ENCODE measurements at regions of chr2 and their contacts with region 1.

Region 1: GRCh38 chr2:101341901-101342624 is 33.6 kb upstream of the RNF149 start:
- DNase-seq: peak; percentile 52
- ATAC-seq: peak; percentile 90
- H3K4me3 ChIP-seq: no peak overlapping the region
- H3K27ac ChIP-seq: no peak overlapping the region
- H3K4me1 ChIP-seq: peaks cover 3 to 10% of the 10 kb centered on the region in 2 experiments; a peak in 2 of 4 replicates
- H3K27me3 ChIP-seq: no peaks in the 10 kb centered on the region
- CTCF ChIP-seq: peak; percentile 83 to 86 (median 85)
- POLR2A ChIP-seq: no peak
- RAD21 ChIP-seq: peak; percentile 95

Region 2: DNA sequence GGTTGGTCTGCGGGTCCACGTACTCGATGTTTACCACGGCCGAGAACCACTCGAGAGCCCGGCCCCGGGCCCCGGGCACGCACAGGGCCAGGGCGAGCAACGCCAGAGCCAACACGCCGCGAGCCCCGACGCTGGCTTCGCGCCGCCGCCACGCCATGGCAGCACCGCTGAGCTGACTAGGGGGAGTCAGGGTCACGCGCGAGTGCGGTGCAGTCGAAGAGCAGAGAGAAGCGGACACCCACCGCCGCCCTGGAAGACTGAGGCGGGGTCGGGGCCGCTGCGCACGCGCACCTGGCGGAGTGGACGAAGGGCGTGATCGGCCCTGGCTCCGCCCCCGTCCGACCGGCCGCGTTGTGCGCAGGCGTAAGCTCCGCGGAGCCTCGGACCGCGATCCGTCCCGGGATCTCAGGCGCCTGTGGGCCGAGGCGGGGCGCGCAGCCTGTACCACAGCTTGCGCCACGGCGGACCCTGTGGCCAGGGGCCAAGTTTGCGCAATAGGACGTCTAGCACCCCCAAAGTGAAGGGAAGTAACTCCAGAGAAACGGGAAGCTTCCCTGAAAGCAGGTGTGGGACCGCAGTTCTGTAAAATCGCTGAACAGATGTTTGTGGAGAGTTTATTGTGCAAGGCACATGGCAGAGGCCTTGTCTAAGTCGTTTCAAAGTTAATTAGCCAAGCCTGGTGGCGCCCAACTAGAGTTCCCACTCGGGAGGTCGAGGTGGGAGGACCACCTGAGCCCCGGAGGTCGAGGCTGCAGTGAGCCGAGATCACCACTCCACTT is 33.4 kb before region 1 on chr2 and contains the start of gene RNF149:
- CTCF ChIA-PET with region 1: interaction called, 12 read pairs
- POLR2A ChIA-PET with region 1: no interaction called
- RAD21 ChIA-PET with region 1: no interaction called
- intact Hi-C with region 1: no loop called
- DNase-seq: peak; percentile 72
- ATAC-seq: peak; percentile 97
- H3K4me3 ChIP-seq: peak within 1 kb of the TSS; percentile 72 to 86
- H3K27ac ChIP-seq: peak within 1 kb of the TSS; percentile 75
- H3K4me1 ChIP-seq: peaks cover 16 to 43% of the 10 kb centered on the region in 2 experiments
- H3K27me3 ChIP-seq: no peaks in the 10 kb centered on the region
- CTCF ChIP-seq: no peak
- POLR2A ChIP-seq: peak; percentile 97
- RAD21 ChIP-seq: no peak
- total RNA-seq, gene RNF149: 40.2 TPM

Region 3: DNA sequence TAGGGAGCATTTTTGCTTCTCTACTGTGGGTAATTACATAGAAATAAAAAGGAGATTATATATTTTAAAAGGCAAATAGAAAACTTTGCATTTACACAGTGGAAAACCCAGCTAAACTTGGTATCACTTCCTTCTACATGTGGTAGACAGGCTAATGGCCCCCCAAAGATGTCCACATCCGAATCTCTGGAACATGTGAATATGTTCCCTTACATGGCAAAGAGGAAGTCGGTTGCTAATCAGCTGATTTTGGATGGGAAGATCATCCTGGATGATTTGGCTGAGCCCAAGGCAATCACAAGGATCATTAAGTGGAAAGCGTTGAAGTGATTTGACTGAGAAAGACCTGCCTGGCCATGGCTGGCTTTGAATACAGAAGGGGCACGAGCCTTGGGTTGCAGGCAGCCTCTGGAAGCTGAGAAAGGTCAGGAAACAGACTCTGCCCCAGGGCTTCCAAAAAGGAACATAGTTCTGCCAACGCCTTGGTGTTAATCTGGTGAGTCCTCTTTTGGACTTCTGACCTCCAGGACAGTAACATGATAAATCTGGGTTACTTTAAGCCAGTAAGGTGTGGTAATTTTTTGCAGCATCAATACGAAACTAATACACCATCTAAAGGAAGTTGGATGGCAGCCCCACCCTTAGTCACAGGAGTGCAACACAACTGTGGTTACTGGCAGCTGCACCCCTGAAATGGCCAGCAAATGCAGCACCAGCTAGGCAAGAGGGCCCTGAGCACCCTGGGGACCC is 19.2 kb after region 1 on chr2:
- CTCF ChIA-PET with region 1: interaction called, 14 read pairs
- POLR2A ChIA-PET with region 1: no interaction called
- RAD21 ChIA-PET with region 1: no interaction called
- intact Hi-C with region 1: no loop called
- DNase-seq: no peak
- ATAC-seq: no peak
- H3K4me3 ChIP-seq: no peak overlapping the region
- H3K27ac ChIP-seq: no peak overlapping the region
- H3K4me1 ChIP-seq: peaks cover 44 to 56% of the 10 kb centered on the region in 2 experiments
- H3K27me3 ChIP-seq: no peaks in the 10 kb centered on the region
- CTCF ChIP-seq: no peak
- POLR2A ChIP-seq: no peak
- RAD21 ChIP-seq: no peak

Region 4: GRCh38 chr2:101419096-101419663 is 77.1 kb after region 1 on chr2:
- CTCF ChIA-PET with region 1: interaction called, 17 read pairs
- POLR2A ChIA-PET with region 1: no interaction called
- RAD21 ChIA-PET with region 1: no interaction called
- intact Hi-C with region 1: loop called (anchors 2 kb)
- DNase-seq: peak; percentile 49
- ATAC-seq: peak; percentile 91
- H3K4me3 ChIP-seq: no peak overlapping the region
- H3K27ac ChIP-seq: no peak overlapping the region
- H3K4me1 ChIP-seq: no peaks in the 10 kb centered on the region
- H3K27me3 ChIP-seq: no peaks in the 10 kb centered on the region
- CTCF ChIP-seq: peak; percentile 71 to 82 (median 80)
- POLR2A ChIP-seq: no peak
- RAD21 ChIP-seq: peak; percentile 91

Region 5: GRCh38 chr2:101831351-101831865 is 489.3 kb after region 1 on chr2:
- CTCF ChIA-PET with region 1: interaction called, 6 read pairs
- POLR2A ChIA-PET with region 1: no interaction called
- RAD21 ChIA-PET with region 1: interaction called in 1 of 2 experiments, 4 read pairs
- intact Hi-C with region 1: loop called (anchors 2 kb)
- DNase-seq: peak; percentile 26
- ATAC-seq: peak; percentile 88
- H3K4me3 ChIP-seq: no peak overlapping the region
- H3K27ac ChIP-seq: peak overlapping the region; percentile 28; the same call in 1 of the 2 replicates
- H3K4me1 ChIP-seq: peaks cover 0 to 12% of the 10 kb centered on the region in 2 experiments; a peak in 1 of 4 replicates
- H3K27me3 ChIP-seq: no peaks in the 10 kb centered on the region
- CTCF ChIP-seq: peak; percentile 65 to 76 (median 66); a peak in 5 of 6 replicates
- POLR2A ChIP-seq: no peak
- RAD21 ChIP-seq: peak; percentile 65